A549 (cell line): ENCODE measurements at regions of chr10 and their contacts with region 1.

Region 1: GRCh38 chr10:103504181-103504783 is 10.8 kb downstream of the NEURL1 start:
- DNase-seq: peak; percentile 77 to 85
- ATAC-seq: peak; percentile 71 to 81; a peak in 5 of 6 replicates
- H3K4me3 ChIP-seq: no peak overlapping the region
- H3K27ac ChIP-seq: peak overlapping the region; percentile 45 to 60; a peak in 3 of 6 replicates
- H3K4me1 ChIP-seq: peaks cover 12% of the 10 kb centered on the region
- CTCF ChIP-seq: no peak
- EP300 ChIP-seq: no peak
- POLR2A ChIP-seq: no peak
- RAD21 ChIP-seq: no peak

Region 2: GRCh38 chr10:103517234-103518085 is 13.2 kb after region 1 on chr10:
- CTCF ChIA-PET with region 1: no interaction called
- POLR2A ChIA-PET with region 1: interaction called, 11 read pairs
- DNase-seq: no peak
- ATAC-seq: no peak
- H3K4me3 ChIP-seq: no peak overlapping the region
- H3K27ac ChIP-seq: no peak overlapping the region
- H3K4me1 ChIP-seq: no peaks in the 10 kb centered on the region
- CTCF ChIP-seq: no peak
- EP300 ChIP-seq: no peak
- POLR2A ChIP-seq: no peak
- RAD21 ChIP-seq: no peak